Endothelial cell of umbilical vein (primary cell): ENCODE measurements at regions of chr4 and their contacts with region 1.

Region 1: DNA sequence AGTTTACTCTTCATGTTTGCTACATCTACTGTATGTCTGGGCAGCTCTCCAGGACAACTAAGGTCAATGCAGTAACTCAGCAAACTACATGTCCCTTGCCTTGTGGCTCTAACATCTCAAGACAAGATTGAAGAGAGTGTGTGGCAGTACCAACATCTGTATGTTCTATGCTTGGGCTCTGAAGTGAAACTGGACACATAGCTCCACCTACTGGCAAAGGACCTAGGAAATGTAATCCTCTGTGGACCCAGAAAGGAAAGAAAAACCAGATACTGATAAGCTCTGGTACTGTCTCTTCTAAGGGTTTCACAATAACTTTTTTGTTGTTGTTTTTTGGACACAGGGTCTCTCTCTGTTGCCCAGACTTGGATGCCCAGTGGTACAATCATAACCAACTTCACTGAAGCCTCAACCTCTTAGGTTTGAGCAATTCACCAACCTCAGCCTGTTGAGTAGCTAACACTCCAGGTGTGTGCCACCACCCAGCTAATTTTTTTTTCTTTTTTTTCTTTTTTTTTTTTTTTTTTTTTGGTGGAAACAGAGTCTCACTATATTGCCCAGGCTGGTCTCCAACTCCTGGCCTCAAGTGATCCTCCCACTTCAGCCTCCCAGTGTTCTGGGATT is 64.1 kb downstream of the QDPR start:
- DNase-seq: peak; percentile 66
- H3K4me3 ChIP-seq: no peak overlapping the region
- H3K27ac ChIP-seq: no peak overlapping the region
- H3K4me1 ChIP-seq: peaks cover 9% of the 10 kb centered on the region
- H3K27me3 ChIP-seq: no peaks in the 10 kb centered on the region
- CTCF ChIP-seq: peak; percentile 58 to 62
- POLR2A ChIP-seq: no peak

Region 2: DNA sequence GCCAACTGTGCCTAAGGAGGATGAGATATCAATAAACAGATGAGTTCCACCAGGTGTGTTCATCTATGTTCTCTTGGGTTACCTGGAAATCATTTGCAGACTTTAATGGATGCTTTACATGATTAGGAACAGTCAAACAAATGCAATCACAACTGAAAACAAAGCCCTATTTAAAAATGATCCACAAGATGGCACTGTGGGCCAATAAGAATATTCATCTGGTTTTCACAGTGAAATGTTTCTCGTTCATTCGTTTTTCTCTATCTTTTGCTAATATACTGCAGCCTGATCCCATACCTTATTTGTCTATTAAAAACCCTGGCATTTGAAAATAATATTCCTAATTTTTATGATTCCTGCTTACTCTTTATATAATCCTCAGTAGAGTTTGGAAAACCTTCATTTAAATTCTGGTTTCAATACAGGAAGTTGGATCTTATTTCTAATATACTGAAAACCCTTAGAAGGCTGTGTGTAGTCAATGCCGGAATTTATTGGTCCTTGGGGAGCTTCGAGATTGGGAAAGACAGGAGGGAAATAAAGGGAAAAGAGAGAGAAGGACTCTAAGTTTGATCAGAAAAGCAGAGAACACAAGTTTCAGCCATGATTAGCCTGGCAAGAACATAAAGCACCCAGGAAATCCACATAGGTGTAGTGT is 1157.8 kb before region 1 on chr4:
- CTCF ChIA-PET with region 1: interaction called, 21 read pairs
- POLR2A ChIA-PET with region 1: no interaction called
- dilution Hi-C with region 1: no loop called
- intact Hi-C with region 1: loop called (anchors 1 kb)
- DNase-seq: peak; percentile 69
- H3K4me3 ChIP-seq: no peak overlapping the region
- H3K27ac ChIP-seq: no peak overlapping the region
- H3K4me1 ChIP-seq: no peaks in the 10 kb centered on the region
- H3K27me3 ChIP-seq: peaks cover 12 to 18% of the 10 kb centered on the region in 2 experiments
- CTCF ChIP-seq: peak; percentile 27 to 41
- POLR2A ChIP-seq: no peak

Region 3: GRCh38 chr4:16764622-16765021 is 683.2 kb before region 1 on chr4:
- CTCF ChIA-PET with region 1: interaction called, 12 read pairs
- POLR2A ChIA-PET with region 1: no interaction called
- dilution Hi-C with region 1: no loop called
- intact Hi-C with region 1: no loop called
- DNase-seq: peak; percentile 21
- H3K4me3 ChIP-seq: no peak overlapping the region
- H3K27ac ChIP-seq: no peak overlapping the region
- H3K4me1 ChIP-seq: no peaks in the 10 kb centered on the region
- H3K27me3 ChIP-seq: no peaks in the 10 kb centered on the region
- CTCF ChIP-seq: peak; percentile 16 to 38
- POLR2A ChIP-seq: no peak

Region 4: GRCh38 chr4:17112292-17112659 is 335.5 kb before region 1 on chr4:
- CTCF ChIA-PET with region 1: interaction called, 3 read pairs
- POLR2A ChIA-PET with region 1: no interaction called
- dilution Hi-C with region 1: no loop called
- intact Hi-C with region 1: loop called (anchors 10 kb)
- DNase-seq: no peak
- H3K4me3 ChIP-seq: no peak overlapping the region
- H3K27ac ChIP-seq: no peak overlapping the region
- H3K4me1 ChIP-seq: no peaks in the 10 kb centered on the region
- H3K27me3 ChIP-seq: no peaks in the 10 kb centered on the region
- CTCF ChIP-seq: peak; percentile 44 to 52
- POLR2A ChIP-seq: no peak

Region 5: DNA sequence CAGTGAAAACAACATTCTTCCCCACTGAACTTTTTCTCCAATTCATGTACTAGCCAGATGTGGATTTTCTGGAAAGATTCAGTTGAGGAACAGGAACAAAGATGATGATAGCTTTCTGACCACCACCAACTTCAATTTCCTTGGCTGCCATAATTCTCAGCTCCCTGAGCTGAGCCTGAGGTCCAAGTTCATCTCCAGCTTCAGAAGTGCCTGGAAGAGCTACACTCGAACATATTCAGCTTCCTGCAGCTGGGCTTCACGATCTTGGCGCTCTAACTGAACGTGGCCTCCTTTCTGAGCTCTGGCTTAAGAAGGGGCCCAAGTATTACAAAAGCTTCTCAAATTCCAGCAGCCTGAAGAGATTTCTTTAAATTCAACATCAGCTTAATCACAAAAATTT is 19.8 kb before region 1 on chr4:
- CTCF ChIA-PET with region 1: interaction called, 11 read pairs
- POLR2A ChIA-PET with region 1: no interaction called
- dilution Hi-C with region 1: no loop called
- intact Hi-C with region 1: no loop called
- DNase-seq: no peak
- H3K4me3 ChIP-seq: no peak overlapping the region
- H3K27ac ChIP-seq: no peak overlapping the region
- H3K4me1 ChIP-seq: no peaks in the 10 kb centered on the region
- H3K27me3 ChIP-seq: no peaks in the 10 kb centered on the region
- CTCF ChIP-seq: no peak
- POLR2A ChIP-seq: no peak